Activated T-helper 1 cell treated with anti-CD3 and anti-CD28 coated beads, Interleukin-12 subunit alpha, Interleukin-12 subunit beta, Interleukin-2, Interleukin-4 antibody, amounts not matched to agents 30 ng/mL and 10 ng/mL and 1 ng/mL, durations not matched to agents 14 hours and 24 hours and 36 hours (primary cell): ENCODE measurements at regions of chr2 and their contacts with region 1.

Region 1: DNA sequence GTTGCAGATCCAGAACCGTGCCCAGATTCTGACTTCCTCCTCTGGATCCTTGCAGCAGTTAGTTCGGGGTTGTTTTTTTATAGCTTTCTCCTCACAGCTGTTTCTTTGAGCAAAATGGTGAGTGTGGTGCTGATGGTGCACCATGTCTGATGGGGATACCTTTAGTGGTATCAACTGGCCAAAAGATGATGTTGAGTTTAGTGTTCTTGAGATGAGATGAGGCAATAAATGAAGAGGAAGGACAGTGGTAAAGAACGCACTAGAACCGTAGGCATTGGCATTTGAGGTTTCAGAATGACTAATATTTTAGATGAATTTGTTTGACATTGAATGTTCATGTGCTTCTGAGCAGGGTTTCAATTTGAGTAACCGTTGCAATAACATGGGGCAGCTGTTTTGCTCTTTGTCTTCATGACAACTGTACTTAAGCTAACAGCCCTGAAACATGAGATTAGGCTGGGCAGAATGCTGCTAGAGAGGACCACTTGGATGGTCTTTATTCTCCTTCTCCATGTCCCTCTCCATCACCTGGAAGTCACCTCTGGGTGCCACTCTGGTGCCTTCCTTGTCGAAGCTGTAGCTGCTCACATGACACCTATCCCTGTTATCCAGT is 3.9 kb downstream of the CTLA4 start:
- DNase-seq: peak; percentile 67
- H3K4me3 Mint-ChIP-seq: peak overlapping the region; percentile 95
- H3K27ac Mint-ChIP-seq: peak overlapping the region; percentile 99
- H3K4me1 Mint-ChIP-seq: peaks cover 82% of the 10 kb centered on the region
- H3K27me3 Mint-ChIP-seq: no peaks in the 10 kb centered on the region

Region 2: DNA sequence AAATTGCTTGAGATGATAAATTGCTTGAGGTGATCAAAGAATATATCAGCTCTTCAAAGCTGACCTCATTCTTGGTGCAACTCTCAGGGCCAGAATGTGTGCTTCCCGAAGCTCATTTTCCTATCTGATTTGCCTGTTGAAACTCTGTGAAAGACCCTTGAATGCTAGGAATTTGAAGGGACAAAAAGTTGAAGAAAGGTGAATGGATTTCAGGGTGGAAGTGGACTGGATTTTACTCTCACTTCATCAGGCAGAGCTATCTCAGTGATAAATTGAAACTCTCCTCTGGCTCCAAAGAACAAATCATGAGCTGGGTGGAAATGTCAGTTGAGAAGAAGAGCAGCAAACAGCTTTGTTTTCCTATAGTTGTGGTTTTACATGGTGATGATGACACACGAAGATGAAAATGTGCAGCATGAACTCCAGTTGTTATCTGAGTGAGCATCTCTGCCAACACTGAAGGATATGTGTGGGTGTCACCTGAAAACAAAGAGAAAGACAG is 130.6 kb before region 1 on chr2:
- intact Hi-C with region 1: loop called (anchors 2 kb)
- DNase-seq: peak; percentile 66
- H3K4me3 Mint-ChIP-seq: peak overlapping the region; percentile 67
- H3K27ac Mint-ChIP-seq: peak overlapping the region; percentile 97
- H3K4me1 Mint-ChIP-seq: peaks cover 78% of the 10 kb centered on the region
- H3K27me3 Mint-ChIP-seq: no peaks in the 10 kb centered on the region

Region 3: GRCh38 chr2:203824057-203824456 is 47.4 kb before region 1 on chr2:
- intact Hi-C with region 1: loop called (anchors 1 kb)
- DNase-seq: no peak
- H3K4me3 Mint-ChIP-seq: no peak overlapping the region
- H3K27ac Mint-ChIP-seq: peak overlapping the region; percentile 79
- H3K4me1 Mint-ChIP-seq: peaks cover 48% of the 10 kb centered on the region
- H3K27me3 Mint-ChIP-seq: no peaks in the 10 kb centered on the region

Region 4: DNA sequence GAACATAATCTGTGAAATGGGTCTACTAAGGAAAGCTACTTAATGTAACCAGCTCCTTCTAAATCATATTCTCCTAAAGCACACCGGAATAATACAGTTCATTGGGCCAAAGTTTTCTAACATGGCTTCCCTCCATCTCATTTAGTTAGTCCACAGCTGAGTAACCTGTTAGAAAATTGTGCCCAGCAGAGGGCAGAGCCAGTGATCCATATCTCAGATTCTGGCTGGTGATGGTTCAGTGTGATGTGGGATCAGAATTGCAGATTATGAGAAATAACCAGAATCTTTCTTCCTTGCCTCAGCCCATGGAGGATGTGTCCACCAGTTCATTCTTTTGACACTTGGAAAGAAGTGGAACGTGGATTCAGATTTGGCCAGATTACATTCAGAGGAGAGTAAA is 13.3 kb before region 1 on chr2:
- intact Hi-C with region 1: loop called (anchors 1 kb)
- DNase-seq: no peak
- H3K4me3 Mint-ChIP-seq: no peak overlapping the region
- H3K27ac Mint-ChIP-seq: no peak overlapping the region
- H3K4me1 Mint-ChIP-seq: peaks cover 76% of the 10 kb centered on the region
- H3K27me3 Mint-ChIP-seq: no peaks in the 10 kb centered on the region

Region 5: GRCh38 chr2:203893401-203893800 is 21.9 kb after region 1 on chr2:
- intact Hi-C with region 1: loop called (anchors 1 kb)
- DNase-seq: no peak
- H3K4me3 Mint-ChIP-seq: no peak overlapping the region
- H3K27ac Mint-ChIP-seq: peak overlapping the region; percentile 89
- H3K4me1 Mint-ChIP-seq: peaks cover 73% of the 10 kb centered on the region
- H3K27me3 Mint-ChIP-seq: no peaks in the 10 kb centered on the region

Region 6: GRCh38 chr2:203918264-203918663 is 46.8 kb after region 1 on chr2:
- intact Hi-C with region 1: no loop called
- DNase-seq: no peak
- H3K4me3 Mint-ChIP-seq: no peak overlapping the region
- H3K27ac Mint-ChIP-seq: no peak overlapping the region
- H3K4me1 Mint-ChIP-seq: peaks cover 45% of the 10 kb centered on the region
- H3K27me3 Mint-ChIP-seq: peaks cover 4% of the 10 kb centered on the region

Region 7: GRCh38 chr2:203934041-203934492 is 62.6 kb after region 1 on chr2:
- intact Hi-C with region 1: loop called (anchors 1 kb)
- DNase-seq: peak; percentile 39
- H3K4me3 Mint-ChIP-seq: peak overlapping the region; percentile 73
- H3K27ac Mint-ChIP-seq: peak overlapping the region; percentile 93
- H3K4me1 Mint-ChIP-seq: peaks cover 59% of the 10 kb centered on the region
- H3K27me3 Mint-ChIP-seq: no peaks in the 10 kb centered on the region